CD4-positive, alpha-beta memory T cell (primary cell): ENCODE measurements at regions of chr2 and their contacts with region 1.

Region 1: GRCh38 chr2:85718009-85718391 is 23.8 kb downstream of the GNLY start:
- DNase-seq: no peak
- H3K4me3 ChIP-seq: no peak overlapping the region
- H3K4me3 Mint-ChIP-seq: no peak overlapping the region
- H3K27ac ChIP-seq: no peak overlapping the region
- H3K27ac Mint-ChIP-seq: no peak overlapping the region
- H3K4me1 ChIP-seq: peaks cover 5% of the 10 kb centered on the region
- H3K4me1 Mint-ChIP-seq: peaks cover 0 to 5% (median 5%) of the 10 kb centered on the region in 4 donors
- H3K27me3 ChIP-seq: peaks cover 3% of the 10 kb centered on the region
- H3K27me3 Mint-ChIP-seq: peaks cover 1 to 3% of the 10 kb centered on the region in 2 donors

Region 2: DNA sequence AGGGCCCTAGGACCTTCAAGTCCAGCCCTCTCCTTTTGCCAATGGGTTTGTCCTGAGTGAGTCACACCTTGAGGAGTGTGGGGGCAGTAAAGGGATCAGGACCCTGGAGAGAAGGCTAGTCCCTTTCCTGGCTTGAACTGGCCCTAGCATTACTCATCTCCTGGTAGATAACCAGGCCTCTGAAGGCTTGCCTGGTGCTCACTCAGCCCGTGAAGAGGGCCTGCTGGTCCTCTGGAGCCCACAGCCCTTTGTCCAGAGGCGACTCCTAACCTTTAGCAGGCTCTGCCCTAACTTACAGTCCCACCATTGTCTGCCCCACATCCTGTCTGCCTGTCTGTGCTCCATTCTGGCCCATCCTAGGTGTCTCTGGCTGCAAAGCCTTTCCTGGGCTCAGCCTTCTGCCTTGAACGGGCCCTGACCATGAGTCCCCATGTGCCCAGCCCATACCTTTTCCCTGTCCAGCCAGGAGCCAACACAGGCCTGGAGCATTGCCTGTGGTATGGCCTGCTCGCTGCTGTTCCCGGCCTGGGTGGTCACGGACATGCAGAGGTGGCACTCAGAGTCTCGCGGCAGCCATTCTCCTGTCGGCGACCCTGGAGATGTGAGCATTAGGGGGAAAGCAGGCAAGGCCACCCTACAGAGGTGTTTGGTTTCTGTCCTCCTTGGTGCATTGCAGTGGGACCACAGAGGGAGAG is 55.0 kb before region 1 on chr2:
- CTCF ChIA-PET with region 1: no interaction called
- POLR2A ChIA-PET with region 1: no interaction called
- intact Hi-C with region 1: no loop called
- DNase-seq: no peak
- H3K4me3 ChIP-seq: no peak overlapping the region
- H3K4me3 Mint-ChIP-seq: no peak overlapping the region
- H3K27ac ChIP-seq: no peak overlapping the region
- H3K27ac Mint-ChIP-seq: no peak overlapping the region
- H3K4me1 ChIP-seq: no peaks in the 10 kb centered on the region
- H3K4me1 Mint-ChIP-seq: no peaks in the 10 kb centered on the region
- H3K27me3 ChIP-seq: no peaks in the 10 kb centered on the region
- H3K27me3 Mint-ChIP-seq: no peaks in the 10 kb centered on the region

Region 3: GRCh38 chr2:85728883-85729824 is 11.2 kb after region 1 on chr2:
- CTCF ChIA-PET with region 1: interaction called, 11 read pairs
- POLR2A ChIA-PET with region 1: no interaction called
- intact Hi-C with region 1: no loop called
- DNase-seq: peak in 4 of 5 donors; percentile 51 to 61 (median 54)
- H3K4me3 ChIP-seq: no peak overlapping the region
- H3K4me3 Mint-ChIP-seq: no peak overlapping the region
- H3K27ac ChIP-seq: no peak overlapping the region
- H3K27ac Mint-ChIP-seq: peak overlapping the region in 1 of 7 donors; percentile 48
- H3K4me1 ChIP-seq: peaks cover 5% of the 10 kb centered on the region
- H3K4me1 Mint-ChIP-seq: peaks cover 0 to 5% (median 2%) of the 10 kb centered on the region in 4 donors
- H3K27me3 ChIP-seq: peaks cover 10% of the 10 kb centered on the region
- H3K27me3 Mint-ChIP-seq: peaks cover 5 to 9% of the 10 kb centered on the region in 2 donors